Posterior cingulate gyrus (tissue), 11 donors: ENCODE measurements at regions of chr5 and their contacts with region 1.

Region 1: GRCh38 chr5:62779010-62779422 is 200.4 kb downstream of the LRRC70 start:
- DNase-seq: peak in 1 of 10 donors; percentile 12

Region 2: GRCh38 chr5:62461561-62461960 is 317.5 kb before region 1 on chr5:
- intact Hi-C with region 1: loop called (anchors 1 kb)
- DNase-seq: no peak